Heart left ventricle (tissue), 16 donors: ENCODE measurements at regions of chr4 and their contacts with region 1.

Region 1: GRCh38 chr4:75935628-75936027 is 5.2 kb downstream of the NAAA start:
- DNase-seq: no peak
- ATAC-seq: no peak
- H3K4me3 ChIP-seq: no peak overlapping the region
- H3K27ac ChIP-seq: no peak overlapping the region
- H3K4me1 ChIP-seq: peaks cover 0 to 12% (median 4%) of the 10 kb centered on the region in 12 donors
- H3K27me3 ChIP-seq: no peaks in the 10 kb centered on the region
- CTCF ChIP-seq: no peak
- POLR2A ChIP-seq: no peak

Region 2: DNA sequence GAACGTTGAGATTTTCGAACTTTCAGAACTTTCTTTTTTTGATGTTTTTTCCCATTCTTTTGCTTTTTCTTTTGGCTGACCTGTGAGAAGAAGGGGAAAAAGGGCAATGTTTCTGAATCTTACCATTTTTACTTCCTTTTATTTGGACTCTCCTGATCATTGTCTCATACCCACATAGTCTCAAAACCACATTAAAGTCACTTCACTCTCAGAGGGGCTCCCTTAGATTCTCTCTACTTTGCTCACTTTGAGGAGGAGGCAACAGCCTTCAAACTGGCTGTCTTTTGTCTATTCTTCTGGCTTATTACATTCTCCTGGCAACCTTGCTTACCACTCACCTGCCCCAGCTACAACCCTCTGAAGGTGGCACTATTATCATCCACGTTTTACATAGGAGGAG is 68.0 kb after region 1 on chr4:
- intact Hi-C with region 1: loop called in 1 of 10 experiments (anchors 2 kb)
- DNase-seq: no peak
- ATAC-seq: no peak
- H3K4me3 ChIP-seq: no peak overlapping the region
- H3K27ac ChIP-seq: peak overlapping the region in 6 of 12 donors; percentile 21 to 77 (median 48)
- H3K4me1 ChIP-seq: peaks cover 0 to 20% (median 4%) of the 10 kb centered on the region in 12 donors
- H3K27me3 ChIP-seq: no peaks in the 10 kb centered on the region
- CTCF ChIP-seq: no peak
- POLR2A ChIP-seq: no peak

Region 3: GRCh38 chr4:76504613-76505465 is 569.2 kb after region 1 on chr4:
- intact Hi-C with region 1: no loop called
- DNase-seq: no peak
- ATAC-seq: peak in 2 of 4 donors; percentile 45 to 47
- H3K4me3 ChIP-seq: no peak overlapping the region
- H3K27ac ChIP-seq: no peak overlapping the region
- H3K4me1 ChIP-seq: no peaks in the 10 kb centered on the region
- H3K27me3 ChIP-seq: no peaks in the 10 kb centered on the region
- CTCF ChIP-seq: peak; percentile 49 to 78 (median 67)
- POLR2A ChIP-seq: no peak